Dorsolateral prefrontal cortex (tissue), 120 donors: ENCODE measurements at regions of chr10 and their contacts with region 1.

Region 1: GRCh38 chr10:31864834-31865518 is 63.7 kb downstream of the ARHGAP12 start:
- DNase-seq: no peak
- H3K4me3 ChIP-seq: peak overlapping the region in 24 of 59 donors; percentile 2 to 40 (median 18)
- H3K27ac ChIP-seq: peak overlapping the region in 17 of 59 donors; percentile 9 to 60 (median 18)
- H3K27me3 ChIP-seq: no peaks in the 10 kb centered on the region
- CTCF ChIP-seq: no peak

Region 2: DNA sequence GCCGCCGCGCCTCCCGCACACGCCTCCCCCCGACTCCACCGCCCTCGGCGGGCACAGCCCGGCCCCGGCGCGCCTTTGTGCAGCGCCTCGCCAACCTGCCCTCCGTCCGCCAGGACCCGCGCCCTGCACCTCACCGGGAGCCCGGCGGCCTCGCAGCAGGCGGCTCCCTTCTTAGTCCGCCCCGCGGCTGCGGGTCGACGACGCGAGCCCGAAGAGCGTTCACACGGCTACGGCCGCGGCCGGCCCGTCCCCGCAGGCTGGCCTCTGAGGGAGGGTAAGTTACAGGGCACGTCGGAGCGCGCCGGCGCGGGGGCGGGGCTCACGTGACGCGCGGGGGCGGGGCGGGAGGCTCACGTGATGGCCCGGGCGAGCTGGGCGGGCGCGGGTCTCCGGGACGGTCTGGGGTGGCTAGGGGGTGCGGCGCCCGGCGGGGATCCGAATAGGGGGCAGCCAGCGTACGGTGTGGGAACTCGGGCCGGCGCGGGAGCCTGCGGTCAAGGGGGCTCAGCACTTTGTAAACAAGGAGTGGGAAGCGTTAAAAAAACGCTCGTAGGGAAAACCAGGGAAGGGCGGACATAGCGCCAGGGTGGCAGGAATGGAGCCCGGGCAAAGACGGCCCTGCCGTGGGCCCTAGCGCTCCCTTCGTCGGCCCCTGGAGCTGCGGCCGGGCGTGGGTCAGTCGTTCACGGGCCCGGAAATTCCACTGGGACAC is 63.7 kb after region 1 on chr10 and contains the start of gene ARHGAP12:
- intact Hi-C with region 1: loop called in 1 of 2 experiments (anchors 5 kb)
- DNase-seq: peak; percentile 71 to 91 (median 80)
- H3K4me3 ChIP-seq: peak within 1 kb of the TSS; percentile 55 to 96 (median 86)
- H3K27ac ChIP-seq: peak within 1 kb of the TSS; percentile 66 to 98 (median 92)
- H3K27me3 ChIP-seq: no peaks in the 10 kb centered on the region
- CTCF ChIP-seq: peak in 10 of 56 donors; percentile 2 to 46 (median 11)
- total RNA-seq, gene ARHGAP12: 27.1 to 48.7 (median 38.6) TPM

Region 3: GRCh38 chr10:31947144-31947926 is 82.4 kb after region 1 on chr10:
- intact Hi-C with region 1: loop called (anchors 5 kb)
- DNase-seq: no peak
- H3K4me3 ChIP-seq: peak overlapping the region in 36 of 59 donors; percentile 0 to 41 (median 21)
- H3K27ac ChIP-seq: peak overlapping the region in 14 of 59 donors; percentile 4 to 58 (median 32)
- H3K27me3 ChIP-seq: no peaks in the 10 kb centered on the region
- CTCF ChIP-seq: peak in 55 of 56 donors; percentile 26 to 73 (median 49)

Region 4: DNA sequence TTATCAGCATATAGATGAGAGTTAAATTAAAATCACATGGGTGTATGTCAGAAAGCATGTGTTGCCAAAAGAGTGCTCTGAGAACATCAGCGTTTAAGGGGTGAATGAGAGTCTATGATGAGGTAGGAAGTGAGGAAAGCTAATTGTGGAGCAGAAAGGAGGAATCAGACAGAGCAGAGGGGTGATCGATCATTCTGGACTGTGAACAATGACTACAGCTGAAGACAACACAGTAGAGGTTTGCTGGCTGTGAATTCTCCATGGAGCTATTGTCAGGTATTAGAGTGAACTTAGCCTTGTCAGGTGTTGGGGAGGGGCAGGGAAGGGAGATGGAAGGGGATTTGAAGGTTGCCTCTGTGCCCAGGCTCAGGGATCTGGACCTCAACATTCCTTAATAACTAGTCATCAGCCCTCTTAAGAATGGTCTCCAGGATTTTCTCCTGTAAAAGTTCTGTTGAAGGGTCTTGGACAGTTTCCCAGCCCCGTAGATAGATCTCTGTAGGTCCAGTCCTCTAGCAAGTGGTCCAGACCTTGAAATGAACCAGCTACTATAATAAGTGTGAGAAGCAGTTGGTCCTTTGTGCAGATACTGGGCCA is 134.2 kb after region 1 on chr10:
- intact Hi-C with region 1: loop called in 1 of 2 experiments (anchors 10 kb)
- DNase-seq: no peak
- H3K4me3 ChIP-seq: no peak overlapping the region
- H3K27ac ChIP-seq: no peak overlapping the region
- H3K27me3 ChIP-seq: no peaks in the 10 kb centered on the region
- CTCF ChIP-seq: no peak

Region 5: GRCh38 chr10:32139223-32140073 is 274.5 kb after region 1 on chr10:
- intact Hi-C with region 1: no loop called
- DNase-seq: peak in 4 of 10 donors; percentile 25 to 47 (median 42)
- H3K4me3 ChIP-seq: no peak overlapping the region
- H3K27ac ChIP-seq: peak overlapping the region in 10 of 59 donors; percentile 8 to 62 (median 38)
- H3K27me3 ChIP-seq: no peaks in the 10 kb centered on the region
- CTCF ChIP-seq: no peak